IMR-90 (cell line): ENCODE measurements at regions of chr13 and their contacts with region 1.

Region 1: DNA sequence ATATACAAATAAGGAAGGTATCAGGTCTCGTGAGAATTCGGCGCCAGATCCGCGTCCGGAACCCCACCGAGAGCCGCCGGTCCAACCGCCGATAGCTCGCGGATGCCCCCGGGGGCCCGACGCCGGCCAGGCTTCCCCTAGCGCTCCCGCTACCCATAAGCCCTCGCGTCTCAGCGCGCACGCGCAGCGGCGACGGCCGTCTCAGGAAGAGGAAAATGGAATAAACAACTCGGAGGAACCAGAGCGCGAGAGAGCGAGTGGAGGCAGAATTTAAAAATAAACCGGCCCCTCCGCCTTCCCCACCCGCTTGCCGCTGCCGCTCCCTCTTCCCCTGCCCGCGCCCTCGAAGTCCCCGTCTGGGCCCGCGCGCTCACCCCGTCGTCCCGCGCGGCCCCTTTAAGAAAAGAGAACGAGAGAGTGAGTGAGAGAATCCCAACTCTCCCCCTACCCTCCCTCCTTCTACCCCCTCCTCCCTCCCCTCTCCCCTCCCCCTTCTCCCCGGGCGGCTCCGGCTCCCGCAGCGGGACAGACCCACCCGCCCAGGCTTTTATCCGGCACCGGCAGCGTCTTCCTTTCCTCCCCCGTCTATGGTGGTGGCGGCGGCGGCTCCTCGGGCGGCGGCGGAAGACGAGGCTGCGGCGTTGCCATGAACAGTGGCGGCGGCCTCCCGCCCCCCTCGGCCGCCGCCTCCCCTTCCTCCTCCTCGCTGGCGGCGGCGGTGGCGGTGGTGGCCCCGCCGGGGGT is at the start of gene PAN3:
- DNase-seq: peak; percentile 89
- ATAC-seq: peak; percentile 74
- H3K4me3 ChIP-seq: peak within 1 kb of the TSS; percentile 81
- H3K27ac ChIP-seq: peak within 1 kb of the TSS; percentile 96
- H3K4me1 ChIP-seq: peaks cover 5% of the 10 kb centered on the region
- H3K27me3 ChIP-seq: no peaks in the 10 kb centered on the region
- CTCF ChIP-seq: peak; percentile 21; the same call in 1 of the 2 replicates
- POLR2A ChIP-seq: peak; percentile 77
- RAD21 ChIP-seq: peak; percentile 25; the same call in 1 of the 2 replicates
- total RNA-seq, gene PAN3: 12.8 and 15.1 TPM in 2 replicates

Region 2: GRCh38 chr13:27997904-27998522 is 140.2 kb before region 1 on chr13:
- CTCF ChIA-PET with region 1: no interaction called
- POLR2A ChIA-PET with region 1: no interaction called
- dilution Hi-C with region 1: no loop called
- in situ Hi-C with region 1: no loop called
- intact Hi-C with region 1: loop called (anchors 5 kb)
- DNase-seq: peak; percentile 28
- ATAC-seq: peak; percentile 88
- H3K4me3 ChIP-seq: no peak overlapping the region
- H3K27ac ChIP-seq: no peak overlapping the region
- H3K4me1 ChIP-seq: no peaks in the 10 kb centered on the region
- H3K27me3 ChIP-seq: peaks cover 14% of the 10 kb centered on the region
- CTCF ChIP-seq: peak; percentile 52
- POLR2A ChIP-seq: no peak
- RAD21 ChIP-seq: peak; percentile 47

Region 3: DNA sequence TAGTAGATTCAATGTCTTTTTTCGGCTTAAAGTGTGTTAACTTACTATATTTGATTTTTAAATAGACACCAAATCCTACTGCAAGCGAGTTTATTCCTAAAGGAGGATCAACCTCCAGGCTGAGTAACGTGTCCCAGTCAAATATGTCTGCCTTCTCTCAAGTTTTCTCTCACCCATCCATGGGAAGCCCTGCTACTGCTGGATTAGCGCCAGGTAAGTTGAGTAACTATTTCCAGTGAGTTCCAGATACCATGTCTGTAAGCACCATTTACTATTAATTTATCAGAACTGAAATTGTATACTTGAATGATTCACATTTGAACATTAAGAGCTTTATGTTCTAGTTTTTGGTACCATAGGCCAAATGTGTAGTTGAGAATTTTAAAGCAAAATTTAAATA is 82.0 kb after region 1 on chr13:
- CTCF ChIA-PET with region 1: no interaction called
- POLR2A ChIA-PET with region 1: no interaction called
- dilution Hi-C with region 1: no loop called
- in situ Hi-C with region 1: no loop called
- intact Hi-C with region 1: loop called (anchors 5 kb)
- DNase-seq: peak; percentile 46
- ATAC-seq: no peak
- H3K4me3 ChIP-seq: no peak overlapping the region
- H3K27ac ChIP-seq: no peak overlapping the region
- H3K4me1 ChIP-seq: no peaks in the 10 kb centered on the region
- H3K27me3 ChIP-seq: no peaks in the 10 kb centered on the region
- CTCF ChIP-seq: no peak
- POLR2A ChIP-seq: no peak
- RAD21 ChIP-seq: no peak

Region 4: GRCh38 chr13:28475916-28476725 is 337.9 kb after region 1 on chr13:
- CTCF ChIA-PET with region 1: no interaction called
- POLR2A ChIA-PET with region 1: no interaction called
- dilution Hi-C with region 1: no loop called
- in situ Hi-C with region 1: no loop called
- intact Hi-C with region 1: loop called (anchors 5 kb)
- DNase-seq: peak; percentile 97
- ATAC-seq: peak; percentile 63
- H3K4me3 ChIP-seq: no peak overlapping the region
- H3K27ac ChIP-seq: peak overlapping the region; percentile 63
- H3K4me1 ChIP-seq: peaks cover 14% of the 10 kb centered on the region
- H3K27me3 ChIP-seq: no peaks in the 10 kb centered on the region
- CTCF ChIP-seq: no peak
- POLR2A ChIP-seq: no peak
- RAD21 ChIP-seq: no peak

Region 5: DNA sequence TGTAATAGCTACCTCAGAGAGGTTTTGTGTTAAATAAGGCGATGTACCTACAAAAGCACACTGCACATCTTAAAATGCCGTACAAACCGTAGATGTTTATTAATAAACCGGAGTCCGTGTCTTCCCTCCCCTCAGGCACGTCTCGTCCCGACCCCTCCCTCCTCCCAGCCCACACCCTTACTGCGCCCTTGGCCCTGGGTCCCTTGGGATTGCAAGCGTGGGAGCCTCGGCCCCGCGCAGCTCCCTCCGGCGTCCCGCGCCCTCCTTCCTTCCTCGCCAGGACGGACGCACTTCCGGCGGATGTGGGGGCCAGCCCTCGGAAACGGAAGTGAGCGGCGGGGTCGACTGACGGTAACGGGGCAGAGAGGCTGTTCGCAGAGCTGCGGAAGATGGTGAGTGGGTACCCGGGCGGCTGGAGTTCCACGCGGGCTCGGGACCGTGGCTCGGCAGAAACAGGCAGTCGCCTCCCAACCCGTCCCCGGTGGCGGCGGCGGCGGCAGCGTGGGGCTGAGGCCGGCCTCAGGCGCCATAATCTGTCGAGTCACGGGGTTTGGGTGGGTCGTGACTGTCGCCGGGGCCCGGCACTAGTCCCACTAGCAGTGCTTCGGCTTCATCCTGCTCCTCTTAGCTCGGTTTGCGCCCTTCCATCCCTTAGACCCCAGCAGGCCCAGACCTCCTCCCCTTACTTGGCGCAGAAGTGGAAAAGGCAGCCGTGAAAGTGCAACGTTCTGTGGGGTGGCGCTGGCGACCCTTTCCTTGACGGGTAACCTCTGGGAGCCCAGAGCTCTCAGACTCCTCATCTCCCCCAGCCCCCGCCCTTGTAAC is 520.8 kb after region 1 on chr13 and contains the start of gene POMP:
- CTCF ChIA-PET with region 1: no interaction called
- POLR2A ChIA-PET with region 1: no interaction called
- dilution Hi-C with region 1: no loop called
- in situ Hi-C with region 1: no loop called
- intact Hi-C with region 1: loop called (anchors 2 kb)
- DNase-seq: peak; percentile 95
- ATAC-seq: peak; percentile 80
- H3K4me3 ChIP-seq: peak within 1 kb of the TSS; percentile 93
- H3K27ac ChIP-seq: peak within 1 kb of the TSS; percentile 90
- H3K4me1 ChIP-seq: peaks cover 8% of the 10 kb centered on the region
- H3K27me3 ChIP-seq: no peaks in the 10 kb centered on the region
- CTCF ChIP-seq: no peak
- POLR2A ChIP-seq: peak; percentile 97
- RAD21 ChIP-seq: peak; percentile 25; the same call in 1 of the 2 replicates
- total RNA-seq, gene POMP: 60.2 and 117 TPM in 2 replicates

Region 6: DNA sequence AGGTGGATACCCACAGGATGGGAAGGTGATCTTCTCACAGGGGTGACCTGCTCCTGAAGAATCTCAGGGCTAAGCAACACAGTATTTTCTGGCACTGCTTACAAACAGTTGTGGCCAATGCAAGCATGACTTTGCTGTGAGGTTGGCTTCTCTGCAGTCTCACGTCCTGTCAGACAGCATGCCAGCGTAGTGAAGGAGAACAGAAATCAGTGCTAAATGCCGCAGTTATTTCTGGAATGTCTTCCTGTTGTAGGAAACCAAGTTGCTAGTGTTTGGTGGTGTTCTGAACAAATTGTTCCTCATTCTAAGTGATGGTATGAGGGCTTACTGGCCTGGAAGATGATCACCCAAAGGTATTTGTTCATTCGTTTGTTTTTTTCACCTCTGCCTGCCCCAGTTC is 1002.1 kb after region 1 on chr13:
- CTCF ChIA-PET with region 1: no interaction called
- POLR2A ChIA-PET with region 1: no interaction called
- dilution Hi-C with region 1: no loop called
- in situ Hi-C with region 1: no loop called
- intact Hi-C with region 1: no loop called
- DNase-seq: no peak
- ATAC-seq: no peak
- H3K4me3 ChIP-seq: no peak overlapping the region
- H3K27ac ChIP-seq: no peak overlapping the region
- H3K4me1 ChIP-seq: no peaks in the 10 kb centered on the region
- H3K27me3 ChIP-seq: no peaks in the 10 kb centered on the region
- CTCF ChIP-seq: no peak
- POLR2A ChIP-seq: no peak
- RAD21 ChIP-seq: no peak